Spleen (tissue), 13 donors: ENCODE measurements at regions of chr5 and their contacts with region 1.

Region 1: GRCh38 chr5:34898258-34898895 is 16.9 kb downstream of the RAD1 start:
- DNase-seq: peak; percentile 77
- H3K4me3 ChIP-seq: no peak overlapping the region
- H3K27ac ChIP-seq: no peak overlapping the region
- H3K4me1 ChIP-seq: peaks cover 0 to 5% (median 0%) of the 10 kb centered on the region in 6 donors
- H3K27me3 ChIP-seq: no peaks in the 10 kb centered on the region
- CTCF ChIP-seq: peak in 10 of 11 experiments; percentile 45 to 86 (median 80)
- POLR2A ChIP-seq: no peak

Region 2: GRCh38 chr5:34486160-34486848 is 412.1 kb before region 1 on chr5:
- intact Hi-C with region 1: loop called (anchors 10 kb)
- DNase-seq: peak; percentile 86
- H3K4me3 ChIP-seq: no peak overlapping the region
- H3K27ac ChIP-seq: no peak overlapping the region
- H3K4me1 ChIP-seq: peaks cover 0 to 12% (median 5%) of the 10 kb centered on the region in 6 donors
- H3K27me3 ChIP-seq: peaks cover 0 to 3% (median 0%) of the 10 kb centered on the region in 7 donors
- CTCF ChIP-seq: peak; percentile 22 to 76 (median 69)
- POLR2A ChIP-seq: no peak

Region 3: DNA sequence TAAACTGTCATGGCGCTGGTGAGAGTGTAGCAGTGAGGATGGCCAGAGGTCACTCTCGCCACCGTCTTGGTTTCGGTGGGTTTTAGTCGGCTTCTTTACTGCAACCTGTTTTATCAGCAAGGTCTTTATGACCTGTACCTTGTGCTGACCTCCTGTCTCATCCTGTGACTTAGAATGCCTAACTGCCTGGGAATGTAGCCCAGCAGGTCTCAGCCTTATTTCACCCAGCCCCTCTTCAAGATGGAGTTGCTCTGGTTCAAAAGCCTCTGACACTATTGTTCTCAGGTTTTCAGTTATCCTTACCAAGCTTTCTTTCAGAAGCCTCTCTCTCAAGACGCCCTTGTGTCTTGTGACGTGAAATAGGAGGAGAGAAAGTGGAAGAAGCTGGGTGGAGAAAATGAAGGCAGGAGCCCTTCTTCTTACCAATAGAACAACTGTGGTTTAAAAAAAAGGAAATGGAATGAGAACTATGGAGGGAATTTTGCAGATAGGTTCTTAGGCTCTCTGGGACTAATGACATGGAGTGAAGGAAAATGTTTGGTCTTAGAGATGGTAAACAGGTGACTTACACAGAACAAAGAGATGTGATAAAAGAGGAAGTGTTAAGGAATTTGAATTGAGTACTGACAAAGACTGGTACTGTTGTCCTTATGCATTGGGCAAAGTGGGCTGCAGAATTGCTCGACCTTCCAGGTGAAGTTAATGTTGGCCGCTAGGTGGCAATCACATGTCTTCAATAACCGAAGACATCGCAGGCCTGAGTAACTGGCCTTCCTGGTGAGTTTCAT is 375.6 kb before region 1 on chr5:
- intact Hi-C with region 1: loop called (anchors 5 kb)
- DNase-seq: no peak
- H3K4me3 ChIP-seq: no peak overlapping the region
- H3K27ac ChIP-seq: peak overlapping the region in 3 of 8 donors; percentile 17 to 59 (median 23)
- H3K4me1 ChIP-seq: peaks cover 8 to 33% (median 17%) of the 10 kb centered on the region in 6 donors
- H3K27me3 ChIP-seq: no peaks in the 10 kb centered on the region
- CTCF ChIP-seq: peak; percentile 27 to 80 (median 69)
- POLR2A ChIP-seq: no peak

Region 4: DNA sequence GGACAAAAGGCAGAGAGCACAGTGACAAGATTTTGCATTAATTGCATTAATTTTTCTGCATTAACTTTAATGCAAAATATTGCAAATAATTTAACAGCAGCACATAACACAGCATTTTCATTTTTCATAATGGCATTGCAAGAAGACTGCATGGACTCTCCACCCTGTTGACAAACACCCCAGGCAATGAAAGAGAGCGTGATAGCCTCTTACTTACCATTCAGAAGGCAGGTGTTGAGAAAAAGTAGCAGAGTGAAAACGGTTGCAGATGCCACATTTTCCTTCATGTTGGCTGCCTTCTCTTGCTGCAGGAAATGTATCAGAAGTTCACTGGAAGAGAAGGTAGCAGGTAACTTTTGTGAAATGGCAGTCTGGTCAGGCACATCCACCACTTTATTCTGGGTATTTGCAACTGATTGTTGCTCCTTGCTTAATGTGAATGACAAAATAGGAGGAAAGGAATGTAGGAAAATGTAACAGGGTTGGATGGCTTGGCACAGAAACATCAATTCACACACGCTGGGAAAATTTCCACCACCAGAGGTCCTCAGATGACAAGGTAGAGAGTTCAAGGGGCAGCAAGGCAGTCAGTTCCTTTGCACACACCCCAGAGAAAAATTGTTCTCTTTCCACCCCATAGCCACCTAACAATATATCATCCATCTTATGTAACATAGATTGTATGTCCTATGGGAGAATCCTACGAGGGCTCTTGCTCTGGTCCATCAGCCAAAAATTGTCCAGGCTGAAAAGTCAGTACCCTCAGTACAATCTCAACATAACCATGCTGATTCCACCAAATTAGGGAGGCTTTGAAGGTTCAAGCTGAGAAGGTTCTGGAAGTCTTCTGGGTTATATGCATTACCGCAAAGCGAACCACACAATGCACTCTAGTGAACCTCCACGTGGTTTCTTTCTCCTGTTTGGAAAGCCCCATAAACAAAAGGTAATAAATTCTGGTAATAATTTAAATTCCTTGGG is 191.2 kb after region 1 on chr5:
- intact Hi-C with region 1: no loop called
- DNase-seq: no peak
- H3K4me3 ChIP-seq: no peak overlapping the region
- H3K27ac ChIP-seq: no peak overlapping the region
- H3K4me1 ChIP-seq: peaks cover 0 to 3% (median 0%) of the 10 kb centered on the region in 6 donors
- H3K27me3 ChIP-seq: no peaks in the 10 kb centered on the region
- CTCF ChIP-seq: peak in 10 of 11 experiments; percentile 32 to 69 (median 63)
- POLR2A ChIP-seq: no peak